ENCODE measurements at regions of chr4 and their contacts with region 1.

Region 1: DNA sequence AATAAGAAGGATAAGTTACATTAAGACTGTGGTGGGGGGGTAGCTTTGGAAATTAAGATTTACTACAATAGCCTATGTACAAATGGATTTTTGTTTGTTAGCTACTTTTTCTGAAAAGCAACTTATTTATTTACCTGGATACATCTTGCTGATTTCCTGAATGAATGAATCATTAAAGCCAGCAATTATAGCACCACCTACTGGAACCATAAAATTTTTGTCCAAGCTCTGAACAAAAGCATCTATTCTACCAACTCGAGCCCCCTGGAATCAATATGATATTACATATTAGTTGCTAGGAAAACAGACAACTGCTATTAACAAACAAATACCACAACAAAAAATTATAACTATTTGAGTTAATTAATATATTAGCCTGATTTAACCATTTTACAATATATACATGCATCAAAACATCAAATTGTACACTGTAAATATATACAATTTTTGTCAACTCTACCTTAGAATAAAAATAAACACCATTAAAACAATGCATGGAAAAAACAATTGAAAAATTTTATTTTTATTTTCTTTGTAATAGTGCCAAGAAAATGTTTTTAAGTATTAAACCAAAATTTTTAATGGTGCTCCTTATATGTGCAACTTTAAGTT is 15.3 kb downstream of the SEPSECS start:
- DNase-seq: peak; percentile 43
- H3K4me3 ChIP-seq: no peak overlapping the region
- H3K27ac ChIP-seq: no peak overlapping the region
- H3K4me1 ChIP-seq: no peaks in the 10 kb centered on the region
- H3K27me3 ChIP-seq: no peaks in the 10 kb centered on the region
- CTCF ChIP-seq: peak; percentile 83
- EP300 ChIP-seq: no peak
- RAD21 ChIP-seq: peak; percentile 70

Region 2: GRCh38 chr4:25129917-25130316 is 15.1 kb before region 1 on chr4:
- CTCF ChIA-PET with region 1: interaction called, 23 read pairs
- POLR2A ChIA-PET with region 1: no interaction called
- DNase-seq: no peak
- H3K4me3 ChIP-seq: no peak overlapping the region
- H3K27ac ChIP-seq: no peak overlapping the region
- H3K4me1 ChIP-seq: no peaks in the 10 kb centered on the region
- H3K27me3 ChIP-seq: no peaks in the 10 kb centered on the region
- CTCF ChIP-seq: no peak
- EP300 ChIP-seq: no peak
- RAD21 ChIP-seq: no peak

Region 3: DNA sequence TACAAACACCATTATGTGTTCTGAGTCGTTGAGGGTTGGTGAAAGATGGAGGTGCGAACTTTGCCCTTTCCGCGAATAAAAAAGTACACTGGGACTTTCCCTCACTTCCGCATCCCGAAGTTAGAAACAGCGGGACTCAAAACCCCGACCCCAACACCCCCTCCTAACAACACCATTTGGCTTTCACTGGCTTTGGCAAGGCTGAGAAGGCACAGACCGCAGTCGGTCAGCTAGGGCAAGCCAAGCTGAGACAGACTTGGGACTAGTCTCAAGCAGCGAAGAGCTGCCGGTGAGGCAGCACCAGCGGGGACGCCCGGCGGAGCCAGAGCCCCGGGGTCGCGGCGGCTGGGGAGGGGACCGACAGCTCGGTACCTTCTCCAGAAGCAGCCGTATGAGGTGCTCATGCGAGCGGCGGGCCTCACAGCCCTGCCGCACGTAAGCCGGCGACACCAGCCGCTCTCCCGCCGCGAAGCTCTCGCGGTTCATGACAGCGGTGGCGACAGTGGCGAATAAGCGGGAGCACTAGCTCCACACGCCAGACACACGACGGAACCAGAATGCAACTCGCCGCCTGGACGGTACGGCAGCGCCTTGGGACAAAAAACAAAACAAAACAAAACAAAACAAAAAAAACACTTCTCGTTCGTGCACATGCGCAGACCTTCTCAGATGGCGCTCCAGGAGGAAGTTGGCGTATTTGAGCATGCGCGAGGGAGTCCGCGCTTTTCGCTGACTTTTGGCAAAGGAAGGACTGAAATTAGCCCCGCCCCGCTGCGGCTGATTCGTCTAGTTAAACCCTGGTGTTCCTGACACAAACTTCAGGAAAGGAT is 15.1 kb after region 1 on chr4 and contains the start of gene SEPSECS:
- CTCF ChIA-PET with region 1: interaction called, 13 read pairs
- POLR2A ChIA-PET with region 1: interaction called, 3 read pairs
- DNase-seq: peak; percentile 86
- H3K4me3 ChIP-seq: peak within 1 kb of the TSS; percentile 84 to 93
- H3K27ac ChIP-seq: peak within 1 kb of the TSS; percentile 86 to 87
- H3K4me1 ChIP-seq: peaks cover 0 to 14% of the 10 kb centered on the region in 2 experiments; a peak in 2 of 4 replicates
- H3K27me3 ChIP-seq: no peaks in the 10 kb centered on the region
- CTCF ChIP-seq: no peak
- EP300 ChIP-seq: peak in 1 of 2 experiments; percentile 31; a peak in 1 of 4 replicates
- RAD21 ChIP-seq: no peak
- polyA plus RNA-seq, gene SEPSECS: 2.0 and 2.7 TPM in 2 replicates

Measured in SK-N-SH (cell line).